Posterior cingulate gyrus (tissue), 11 donors: ENCODE measurements at regions of chr2 and their contacts with region 1.

Region 1: DNA sequence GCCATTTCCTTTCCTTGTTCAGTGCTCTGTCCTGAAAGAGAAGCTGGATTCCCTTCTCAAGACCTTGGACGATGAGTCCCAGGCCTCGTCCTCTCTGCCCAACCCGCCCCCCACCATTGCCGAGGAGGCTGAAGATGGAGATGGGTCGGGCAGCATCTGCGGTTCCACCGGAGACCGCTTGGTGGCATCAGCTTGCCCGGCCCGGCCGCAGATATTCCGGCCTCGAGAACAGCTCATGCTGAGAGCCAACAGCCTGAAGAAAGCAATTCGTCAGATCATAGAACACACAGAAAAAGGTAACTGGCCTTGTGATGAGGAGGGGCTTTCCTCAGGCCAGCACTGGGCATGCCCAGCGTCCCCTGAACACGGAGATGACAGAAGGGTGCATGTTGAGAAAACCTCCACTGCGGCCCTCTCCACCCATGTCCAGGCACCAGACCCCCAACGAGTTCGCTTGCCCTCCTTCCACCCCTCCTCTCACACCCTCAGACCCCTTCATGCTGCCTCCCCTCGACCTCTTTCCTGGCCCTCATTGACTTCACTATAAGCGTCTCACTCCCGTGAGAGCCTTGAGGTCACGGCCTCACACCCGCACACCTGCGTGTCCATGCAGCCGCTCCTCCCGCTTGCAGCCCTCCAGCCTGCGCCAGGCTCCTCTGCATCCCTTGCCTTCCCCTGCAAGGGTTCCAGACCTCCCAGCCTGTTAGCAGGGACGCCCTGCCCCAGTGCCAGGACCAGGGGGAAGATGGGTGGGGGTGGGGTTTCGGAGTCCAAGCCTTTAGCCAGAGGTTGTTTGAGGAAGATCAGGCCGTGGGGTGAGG is 95.0 kb downstream of the DGKD start:
- DNase-seq: peak; percentile 50 to 96 (median 68)

Region 2: GRCh38 chr2:233363744-233364235 is 85.5 kb before region 1 on chr2:
- intact Hi-C with region 1: no loop called
- DNase-seq: no peak

Region 3: DNA sequence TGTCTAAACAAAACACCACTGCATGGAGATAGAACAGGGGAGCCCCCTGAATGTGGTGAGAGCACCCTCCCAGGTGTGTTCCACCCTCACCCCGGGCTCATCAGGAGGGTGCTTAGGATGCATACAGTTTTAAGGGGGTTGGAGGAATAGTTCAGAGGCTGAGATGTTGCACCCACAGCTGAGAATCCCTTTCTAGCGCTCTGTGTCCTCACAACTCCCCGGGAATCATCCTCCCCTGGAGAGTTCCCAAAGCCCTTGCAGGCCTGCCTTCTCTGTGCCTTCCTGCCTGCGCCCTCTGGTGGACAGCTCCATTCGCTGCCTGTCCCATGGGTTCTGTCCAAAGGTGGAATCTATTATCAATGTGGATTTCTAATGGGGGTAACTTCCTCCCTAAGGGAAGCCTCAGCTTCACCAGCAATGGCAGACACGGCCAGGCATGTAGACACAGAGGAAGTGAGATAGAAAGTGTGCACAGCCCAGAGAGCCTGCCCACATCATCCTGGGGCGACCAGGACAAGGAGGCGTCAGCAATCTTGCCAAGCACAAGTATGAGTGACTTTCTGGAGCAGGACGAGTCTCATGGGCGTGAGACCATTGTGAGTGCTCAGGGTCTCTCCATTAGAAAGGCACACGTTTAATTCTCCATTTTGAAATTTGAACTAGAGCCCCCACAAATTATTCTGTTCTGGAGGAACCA is 262.2 kb after region 1 on chr2:
- intact Hi-C with region 1: loop called (anchors 5 kb)
- DNase-seq: peak; percentile 18 to 95 (median 79)